CD14-positive monocyte (primary cell): ENCODE measurements at regions of chr18 and their contacts with region 1.

Region 1: DNA sequence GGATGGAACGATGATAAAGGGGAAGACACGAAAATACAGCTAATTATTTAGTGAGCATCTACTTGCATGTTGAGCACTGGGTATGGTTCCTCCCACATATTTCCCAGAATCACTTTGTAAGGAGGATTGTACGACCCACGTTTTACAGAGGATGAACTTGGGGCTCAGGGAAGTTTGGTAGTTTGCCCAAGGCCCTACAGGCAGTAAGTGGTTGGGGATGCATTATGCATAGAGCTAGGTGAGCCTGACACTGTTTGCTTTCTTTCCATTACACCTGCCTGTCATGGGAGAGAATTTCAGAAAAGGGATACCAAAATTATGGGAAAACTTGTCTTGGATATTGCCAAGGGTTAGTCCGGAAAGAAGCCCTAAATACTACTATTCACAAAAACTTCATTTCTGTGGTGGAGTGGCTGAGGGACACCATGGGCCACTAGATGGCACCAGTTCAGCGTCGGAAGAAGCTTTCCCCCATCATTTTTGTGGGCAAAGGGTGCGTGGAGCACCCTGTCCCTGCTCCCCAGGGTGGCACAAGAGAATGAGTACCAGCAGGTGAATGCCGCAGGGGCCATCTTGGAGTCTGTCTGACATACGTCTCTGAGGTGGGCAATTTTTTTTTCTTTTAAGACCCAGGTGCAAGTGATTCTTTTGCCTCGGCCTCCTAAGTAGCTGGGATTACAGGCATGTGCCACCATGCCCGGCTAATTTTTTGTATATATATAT is 23.5 kb upstream of the C18orf32 start:
- DNase-seq: peak; percentile 21 to 44 (median 41)
- H3K4me3 ChIP-seq: no peak overlapping the region
- H3K4me3 Mint-ChIP-seq: no peak overlapping the region
- H3K27ac ChIP-seq: no peak overlapping the region
- H3K27ac Mint-ChIP-seq: no peak overlapping the region
- H3K4me1 ChIP-seq: no peaks in the 10 kb centered on the region
- H3K4me1 Mint-ChIP-seq: no peaks in the 10 kb centered on the region
- H3K27me3 ChIP-seq: no peaks in the 10 kb centered on the region
- H3K27me3 Mint-ChIP-seq: peaks cover 9 to 25% (median 10%) of the 10 kb centered on the region in 3 donors
- CTCF ChIP-seq: peak; percentile 83

Region 2: GRCh38 chr18:49849331-49850217 is 339.0 kb after region 1 on chr18:
- intact Hi-C with region 1: loop called in 1 of 2 experiments (anchors 5 kb)
- DNase-seq: no peak
- H3K4me3 ChIP-seq: no peak overlapping the region
- H3K4me3 Mint-ChIP-seq: peak overlapping the region in 1 of 2 donors; percentile 32
- H3K27ac ChIP-seq: no peak overlapping the region
- H3K27ac Mint-ChIP-seq: peak overlapping the region in 1 of 7 donors; percentile 12
- H3K4me1 ChIP-seq: no peaks in the 10 kb centered on the region
- H3K4me1 Mint-ChIP-seq: no peaks in the 10 kb centered on the region
- H3K27me3 ChIP-seq: no peaks in the 10 kb centered on the region
- H3K27me3 Mint-ChIP-seq: peaks cover 4 to 8% (median 5%) of the 10 kb centered on the region in 3 donors
- CTCF ChIP-seq: no peak

Region 3: DNA sequence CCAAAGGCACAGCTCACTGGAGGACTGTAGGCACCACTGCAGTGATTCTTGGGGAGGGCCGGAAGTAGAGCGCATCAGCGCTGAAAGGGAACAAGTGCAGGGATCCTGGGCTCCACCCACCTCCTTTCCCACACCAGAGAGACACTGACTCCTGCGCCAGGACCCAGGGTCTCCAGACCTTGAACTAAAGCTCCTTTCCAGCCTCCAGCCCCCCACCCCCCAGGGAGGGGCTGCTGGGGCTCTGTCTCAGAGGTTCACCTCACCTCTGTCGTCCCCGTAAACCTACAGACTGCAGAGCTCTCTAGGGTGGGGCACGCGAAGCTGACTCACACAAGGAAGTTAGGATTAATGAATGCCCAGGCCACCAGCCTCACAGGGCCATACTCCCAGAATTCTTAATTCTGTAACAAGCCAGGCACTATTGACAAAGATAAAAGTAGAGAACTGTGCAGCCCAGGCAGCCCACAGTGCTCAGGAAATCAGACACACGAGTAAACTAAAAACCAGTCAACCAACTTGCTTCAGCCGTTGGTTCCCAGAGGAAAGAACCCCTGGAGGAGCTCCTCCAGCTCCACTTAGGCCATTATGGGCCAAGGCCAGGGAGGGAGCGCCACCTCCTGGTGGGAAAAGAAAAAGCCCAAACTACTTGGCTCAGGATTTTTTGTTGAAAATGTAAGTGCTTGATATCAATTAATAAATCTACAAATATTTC is 347.9 kb after region 1 on chr18:
- intact Hi-C with region 1: loop called (anchors 2 to 5 kb)
- DNase-seq: peak; percentile 25 to 46 (median 38)
- H3K4me3 ChIP-seq: no peak overlapping the region
- H3K4me3 Mint-ChIP-seq: no peak overlapping the region
- H3K27ac ChIP-seq: no peak overlapping the region
- H3K27ac Mint-ChIP-seq: no peak overlapping the region
- H3K4me1 ChIP-seq: no peaks in the 10 kb centered on the region
- H3K4me1 Mint-ChIP-seq: no peaks in the 10 kb centered on the region
- H3K27me3 ChIP-seq: no peaks in the 10 kb centered on the region
- H3K27me3 Mint-ChIP-seq: peaks cover 0 to 3% (median 0%) of the 10 kb centered on the region in 3 donors
- CTCF ChIP-seq: peak; percentile 92